Activated CD4-positive, alpha-beta T cell treated with anti-CD3 and anti-CD28 coated beads for 36 hours (primary cell): ENCODE measurements at regions of chr12 and their contacts with region 1.

Region 1: GRCh38 chr12:92551853-92552397 is 150.9 kb upstream of the PLEKHG7 start:
- DNase-seq: peak; percentile 75
- ATAC-seq: peak; percentile 82
- H3K4me3 Mint-ChIP-seq: no peak overlapping the region
- H3K27ac Mint-ChIP-seq: no peak overlapping the region
- H3K4me1 Mint-ChIP-seq: peaks cover 16% of the 10 kb centered on the region
- H3K27me3 Mint-ChIP-seq: no peaks in the 10 kb centered on the region

Region 2: DNA sequence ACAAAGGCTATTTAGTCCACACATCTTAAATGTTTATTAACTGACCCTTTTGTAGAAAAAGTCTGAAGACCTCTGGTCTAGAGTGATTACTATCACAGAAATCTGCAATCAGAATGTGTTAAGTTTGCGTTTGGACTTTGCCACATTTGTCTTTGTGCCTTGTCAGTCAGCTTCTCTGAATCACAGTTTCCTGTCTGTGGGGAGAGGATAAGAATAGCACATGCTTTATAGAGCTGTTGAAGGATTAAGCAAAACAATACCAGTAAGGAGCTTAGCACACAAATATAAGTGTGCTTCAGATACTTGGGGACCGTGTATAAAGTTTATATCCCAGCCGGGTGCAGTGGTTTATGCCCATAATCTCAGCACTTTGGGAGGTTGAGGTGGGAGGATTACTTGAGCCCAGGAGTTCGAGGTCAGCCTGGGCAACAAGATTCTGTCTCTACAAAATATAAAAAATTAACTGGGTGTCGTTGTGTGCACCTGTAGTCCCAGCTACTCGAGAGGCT is 343.3 kb before region 1 on chr12:
- CTCF ChIA-PET with region 1: no interaction called
- POLR2A ChIA-PET with region 1: no interaction called
- intact Hi-C with region 1: loop called in 1 of 2 experiments (anchors 5 kb)
- DNase-seq: peak; percentile 40
- ATAC-seq: peak; percentile 77
- H3K4me3 Mint-ChIP-seq: peak overlapping the region; percentile 67
- H3K27ac Mint-ChIP-seq: peak overlapping the region; percentile 81
- H3K4me1 Mint-ChIP-seq: peaks cover 32% of the 10 kb centered on the region
- H3K27me3 Mint-ChIP-seq: no peaks in the 10 kb centered on the region

Region 3: DNA sequence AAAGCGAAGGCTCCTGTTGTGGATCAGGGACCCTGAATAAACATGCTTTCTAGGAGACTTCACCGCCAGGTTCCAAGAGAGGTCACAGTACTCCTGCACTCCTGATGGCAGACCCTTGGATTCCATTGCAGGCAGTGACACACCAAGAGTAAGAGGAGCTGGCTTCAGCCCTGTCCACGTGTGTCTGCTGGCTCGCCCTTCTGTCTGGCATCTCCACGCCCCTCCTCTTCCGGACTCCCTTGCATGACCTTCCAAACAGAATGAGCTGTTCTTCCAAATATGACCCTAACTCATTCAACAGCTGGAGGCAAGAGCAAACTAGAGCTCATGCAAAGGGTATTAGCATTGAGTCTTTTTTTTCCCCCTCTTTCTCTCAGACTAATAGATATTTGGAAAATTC is 82.1 kb before region 1 on chr12:
- CTCF ChIA-PET with region 1: no interaction called
- POLR2A ChIA-PET with region 1: no interaction called
- intact Hi-C with region 1: loop called (anchors 1 kb)
- DNase-seq: no peak
- ATAC-seq: no peak
- H3K4me3 Mint-ChIP-seq: no peak overlapping the region
- H3K27ac Mint-ChIP-seq: peak overlapping the region; percentile 85
- H3K4me1 Mint-ChIP-seq: peaks cover 48% of the 10 kb centered on the region
- H3K27me3 Mint-ChIP-seq: no peaks in the 10 kb centered on the region

Region 4: GRCh38 chr12:92539113-92539749 is 12.7 kb before region 1 on chr12:
- CTCF ChIA-PET with region 1: no interaction called
- POLR2A ChIA-PET with region 1: no interaction called
- intact Hi-C with region 1: loop called (anchors 1 kb)
- DNase-seq: peak; percentile 43
- ATAC-seq: peak; percentile 77
- H3K4me3 Mint-ChIP-seq: no peak overlapping the region
- H3K27ac Mint-ChIP-seq: peak overlapping the region; percentile 92
- H3K4me1 Mint-ChIP-seq: peaks cover 60% of the 10 kb centered on the region
- H3K27me3 Mint-ChIP-seq: no peaks in the 10 kb centered on the region

Region 5: DNA sequence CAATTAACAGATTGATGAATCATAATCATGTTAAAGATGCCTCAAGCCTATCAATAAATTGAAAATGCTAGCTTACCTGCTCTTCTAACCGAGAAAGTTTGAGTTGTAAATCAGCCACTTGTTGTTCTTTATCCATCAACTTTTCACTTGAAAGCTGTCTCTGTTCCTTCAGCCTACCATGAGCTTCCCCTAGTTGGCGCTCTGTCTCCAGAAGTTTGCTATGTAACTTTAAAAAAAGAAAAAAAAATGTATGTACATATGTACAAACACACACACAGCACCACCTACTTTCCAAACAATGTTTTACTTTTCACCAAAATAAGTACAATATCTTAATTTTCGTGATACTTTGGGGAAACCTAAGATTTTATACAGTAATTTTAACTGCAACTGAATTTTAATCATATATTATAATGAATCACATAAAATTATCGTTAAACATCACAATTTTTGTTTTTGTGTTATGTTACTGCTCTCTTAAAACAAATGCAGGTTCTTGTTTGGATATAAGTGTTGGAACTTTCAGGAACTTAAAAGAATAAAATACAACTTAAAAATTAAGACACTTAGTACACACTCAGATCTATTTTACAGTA is 276.0 kb after region 1 on chr12:
- CTCF ChIA-PET with region 1: no interaction called
- POLR2A ChIA-PET with region 1: no interaction called
- intact Hi-C with region 1: no loop called
- DNase-seq: peak; percentile 61
- ATAC-seq: no peak
- H3K4me3 Mint-ChIP-seq: no peak overlapping the region
- H3K27ac Mint-ChIP-seq: no peak overlapping the region
- H3K4me1 Mint-ChIP-seq: peaks cover 2% of the 10 kb centered on the region
- H3K27me3 Mint-ChIP-seq: no peaks in the 10 kb centered on the region